Sigmoid colon (tissue), 7 donors: ENCODE measurements at regions of chr6 and their contacts with region 1.

Region 1: DNA sequence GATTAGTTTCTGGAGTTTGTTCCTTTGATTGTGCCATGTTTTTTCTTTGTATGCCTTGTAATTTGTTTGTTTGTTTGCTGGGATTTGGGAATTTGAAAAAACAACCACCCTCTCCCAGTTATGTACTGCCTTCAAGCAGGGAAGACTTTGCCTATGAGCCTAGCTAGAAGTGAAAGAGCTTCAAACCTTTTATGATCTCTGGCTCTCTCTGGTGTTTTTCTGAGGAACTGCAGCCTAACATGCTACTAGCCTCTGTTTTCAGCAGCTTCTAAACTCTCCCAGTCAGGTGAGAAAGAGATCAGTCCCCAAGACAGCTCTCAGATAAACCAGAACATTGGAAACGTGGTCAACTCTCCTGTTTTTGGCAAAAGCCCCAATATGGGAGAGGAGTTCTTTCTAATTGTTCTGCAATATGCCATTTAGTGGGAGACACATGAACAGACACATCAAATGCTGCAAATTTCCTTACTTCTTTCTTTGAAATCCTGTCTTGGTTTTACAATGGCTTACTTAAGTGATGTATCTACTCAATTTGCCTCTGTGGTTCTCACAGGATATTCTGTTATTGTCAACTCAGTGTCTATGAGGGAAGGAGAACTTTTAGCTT is 58.9 kb upstream of the SERINC1 start:
- DNase-seq: no peak
- H3K4me3 ChIP-seq: no peak overlapping the region
- H3K27ac ChIP-seq: no peak overlapping the region
- H3K4me1 ChIP-seq: no peaks in the 10 kb centered on the region
- H3K27me3 ChIP-seq: no peaks in the 10 kb centered on the region
- CTCF ChIP-seq: peak; percentile 66 to 88 (median 76)
- EP300 ChIP-seq: no peak
- POLR2A ChIP-seq: no peak

Region 2: DNA sequence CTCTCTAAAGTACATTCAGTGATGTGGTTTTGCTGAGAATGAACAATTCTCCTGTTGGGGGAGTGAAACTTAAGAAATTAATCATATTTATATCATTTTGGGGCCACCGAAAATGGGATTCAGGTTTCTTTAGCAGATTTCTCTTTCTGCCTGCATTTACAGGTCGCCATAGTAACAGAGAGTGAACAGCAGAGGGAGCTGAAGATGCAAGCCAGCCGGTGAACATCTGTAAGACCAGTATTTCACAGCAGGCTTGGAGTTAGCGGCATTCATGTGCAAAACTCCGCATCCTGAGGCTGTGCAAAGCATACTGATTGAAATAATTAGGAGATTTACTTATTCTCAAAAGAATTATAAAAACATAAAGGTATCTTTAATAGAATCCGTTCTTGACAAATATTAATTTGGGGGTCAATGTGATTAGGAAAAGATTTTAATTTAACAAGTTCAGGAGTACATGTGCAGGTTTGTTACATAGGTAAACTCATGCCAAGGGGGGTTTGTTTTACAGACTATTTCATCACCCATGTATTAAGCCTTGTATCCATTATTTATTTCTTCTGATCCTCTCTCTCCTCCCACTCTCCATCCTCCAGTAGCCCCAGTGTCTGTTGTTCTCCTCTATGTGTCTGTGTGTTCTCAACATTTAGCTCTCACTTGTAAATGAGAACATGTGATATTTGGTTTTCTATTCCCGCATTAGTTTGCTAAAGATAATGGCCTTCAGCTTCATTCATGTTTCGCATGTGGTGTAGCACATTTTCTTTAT is 148.9 kb before region 1 on chr6:
- intact Hi-C with region 1: loop called (anchors 2 kb)
- DNase-seq: peak; percentile 83
- H3K4me3 ChIP-seq: no peak overlapping the region
- H3K27ac ChIP-seq: no peak overlapping the region
- H3K4me1 ChIP-seq: no peaks in the 10 kb centered on the region
- H3K27me3 ChIP-seq: no peaks in the 10 kb centered on the region
- CTCF ChIP-seq: peak; percentile 31 to 69 (median 58)
- EP300 ChIP-seq: no peak
- POLR2A ChIP-seq: no peak

Region 3: GRCh38 chr6:122471107-122472021 is 59.2 kb before region 1 on chr6 and contains the start of gene SERINC1:
- intact Hi-C with region 1: loop called (anchors 10 kb)
- DNase-seq: peak; percentile 97
- H3K4me3 ChIP-seq: peak within 1 kb of the TSS; percentile 70 to 92 (median 85)
- H3K27ac ChIP-seq: peak within 1 kb of the TSS; percentile 92 to 98 (median 94)
- H3K4me1 ChIP-seq: peaks cover 0 to 46% (median 21%) of the 10 kb centered on the region in 4 donors
- H3K27me3 ChIP-seq: no peaks in the 10 kb centered on the region
- CTCF ChIP-seq: no peak
- EP300 ChIP-seq: no peak
- POLR2A ChIP-seq: peak; percentile 90
- total RNA-seq, gene SERINC1: 220 to 301 (median 239) TPM

Region 4: GRCh38 chr6:122491919-122492555 is 38.5 kb before region 1 on chr6:
- intact Hi-C with region 1: loop called (anchors 1 kb)
- DNase-seq: peak; percentile 76
- H3K4me3 ChIP-seq: no peak overlapping the region
- H3K27ac ChIP-seq: no peak overlapping the region
- H3K4me1 ChIP-seq: no peaks in the 10 kb centered on the region
- H3K27me3 ChIP-seq: no peaks in the 10 kb centered on the region
- CTCF ChIP-seq: peak in 3 of 4 experiments; percentile 42 to 79 (median 57)
- EP300 ChIP-seq: no peak
- POLR2A ChIP-seq: no peak